Right ventricle myocardium inferior (tissue), 1 donor: ENCODE measurements at regions of chr18 and their contacts with region 1.

Region 1: DNA sequence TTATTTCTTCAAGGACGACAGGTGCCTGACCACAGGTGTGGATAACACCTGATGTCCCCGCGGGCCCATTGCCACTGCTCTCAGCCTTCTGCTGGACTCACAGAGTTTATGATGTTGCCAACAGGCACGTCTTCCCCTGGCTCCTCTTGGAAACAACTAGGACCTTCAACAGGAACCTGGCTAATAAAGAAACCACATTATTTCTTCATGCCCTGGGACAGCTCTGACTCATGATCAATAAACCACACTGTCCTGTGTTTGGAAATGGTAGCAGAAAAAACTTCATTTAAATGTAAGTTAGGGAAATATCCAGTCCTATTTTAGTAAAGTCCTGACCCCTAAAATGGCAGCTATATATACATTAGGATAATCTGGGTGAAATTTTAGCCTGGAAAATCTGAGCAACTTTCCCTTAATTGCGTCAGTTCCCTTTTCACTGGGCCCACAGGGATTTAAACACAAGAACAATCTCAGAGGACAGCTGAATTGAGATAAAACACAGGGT is 158.9 kb downstream of the VAPA start:
- DNase-seq: no peak
- ATAC-seq: no peak

Region 2: GRCh38 chr18:9894454-9895068 is 178.2 kb before region 1 on chr18:
- intact Hi-C with region 1: no loop called
- DNase-seq: no peak
- ATAC-seq: no peak

Region 3: GRCh38 chr18:9943311-9943710 is 129.4 kb before region 1 on chr18:
- intact Hi-C with region 1: no loop called
- DNase-seq: no peak
- ATAC-seq: peak; percentile 52

Region 4: GRCh38 chr18:10131460-10132395 is 59.0 kb after region 1 on chr18:
- intact Hi-C with region 1: loop called (anchors 5 kb)
- DNase-seq: no peak
- ATAC-seq: peak; percentile 68